Gastrocnemius medialis (tissue), 4 donors: ENCODE measurements at regions of chr18 and their contacts with region 1.

Region 1: GRCh38 chr18:77207540-77207939 is 42.1 kb upstream of the GALR1 start:
- DNase-seq: peak; percentile 17 to 55
- ATAC-seq: peak; percentile 48 to 74
- H3K4me3 ChIP-seq: peak overlapping the region in 1 of 4 donors; percentile 35
- H3K27ac ChIP-seq: peak overlapping the region; percentile 51 to 77 (median 76)
- H3K4me1 ChIP-seq: peaks cover 0 to 32% of the 10 kb centered on the region in 2 donors
- H3K27me3 ChIP-seq: no peaks in the 10 kb centered on the region
- CTCF ChIP-seq: peak; percentile 38 to 62 (median 49)
- POLR2A ChIP-seq: no peak

Region 2: DNA sequence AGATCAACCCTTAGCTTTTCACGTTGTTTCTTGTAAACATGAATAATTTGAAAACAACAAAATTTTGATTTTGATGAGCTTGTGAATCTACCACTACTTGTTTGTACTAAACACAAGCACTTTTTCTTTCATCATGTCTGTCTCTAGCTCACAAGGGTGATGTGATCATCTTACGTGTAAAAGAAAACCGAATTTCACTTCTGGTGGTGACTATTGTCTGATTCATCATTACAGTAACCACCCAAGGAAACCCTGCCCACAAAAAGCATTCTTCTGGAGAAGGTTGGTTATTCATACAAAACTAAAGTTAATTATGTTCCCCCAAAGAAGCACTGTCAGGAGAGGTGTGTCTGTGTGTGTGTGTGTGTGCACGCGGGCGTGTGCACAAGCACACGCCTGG is 997.9 kb before region 1 on chr18:
- in situ Hi-C with region 1: no loop called
- intact Hi-C with region 1: no loop called
- DNase-seq: no peak
- ATAC-seq: no peak
- H3K4me3 ChIP-seq: no peak overlapping the region
- H3K27ac ChIP-seq: no peak overlapping the region
- H3K4me1 ChIP-seq: no peaks in the 10 kb centered on the region
- H3K27me3 ChIP-seq: no peaks in the 10 kb centered on the region
- CTCF ChIP-seq: no peak
- POLR2A ChIP-seq: no peak

Region 3: DNA sequence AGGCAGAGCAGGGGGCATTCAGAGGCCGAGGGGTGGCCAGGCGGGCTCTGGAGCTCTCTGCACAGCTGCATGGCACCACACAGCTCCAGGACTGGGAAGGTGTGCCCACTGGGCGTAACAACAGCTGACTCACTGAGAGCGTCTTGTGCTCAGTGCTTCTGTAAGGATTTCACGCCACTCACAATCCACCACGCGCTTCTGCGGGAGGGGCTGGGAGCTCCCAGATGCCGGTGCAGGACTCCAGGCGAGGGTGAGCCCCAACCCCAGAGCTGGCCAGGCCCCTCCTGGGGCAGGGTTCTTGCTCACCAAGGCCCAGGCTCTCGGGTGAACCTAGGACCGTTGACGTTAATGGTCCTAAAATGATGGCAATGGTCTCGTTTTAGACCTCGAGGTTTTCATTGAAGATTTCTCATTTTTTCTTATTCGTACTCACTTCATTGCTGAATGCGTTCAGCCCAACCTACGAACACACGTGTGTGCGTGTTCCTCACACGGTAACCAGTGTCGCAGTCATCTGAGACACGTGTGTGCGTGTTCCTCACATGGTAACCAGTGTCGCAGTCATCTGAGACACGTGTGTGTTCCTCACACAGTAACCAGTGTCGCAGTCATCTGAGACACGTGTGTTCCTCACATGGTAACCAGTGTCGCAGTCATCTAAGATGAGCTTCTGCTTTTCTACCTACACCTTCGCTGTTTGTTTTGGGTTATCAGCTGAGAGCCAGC is 423.6 kb before region 1 on chr18:
- in situ Hi-C with region 1: no loop called
- intact Hi-C with region 1: no loop called
- DNase-seq: no peak
- ATAC-seq: no peak
- H3K4me3 ChIP-seq: no peak overlapping the region
- H3K27ac ChIP-seq: no peak overlapping the region
- H3K4me1 ChIP-seq: no peaks in the 10 kb centered on the region
- H3K27me3 ChIP-seq: peaks cover 0 to 14% (median 6%) of the 10 kb centered on the region in 3 donors
- CTCF ChIP-seq: no peak
- POLR2A ChIP-seq: no peak

Region 4: GRCh38 chr18:76875390-76876325 is 331.9 kb before region 1 on chr18:
- in situ Hi-C with region 1: no loop called
- intact Hi-C with region 1: loop called (anchors 10 kb)
- DNase-seq: no peak
- ATAC-seq: no peak
- H3K4me3 ChIP-seq: no peak overlapping the region
- H3K27ac ChIP-seq: no peak overlapping the region
- H3K4me1 ChIP-seq: no peaks in the 10 kb centered on the region
- H3K27me3 ChIP-seq: no peaks in the 10 kb centered on the region
- CTCF ChIP-seq: peak in 3 of 5 experiments; percentile 33 to 58 (median 46)
- POLR2A ChIP-seq: no peak

Region 5: DNA sequence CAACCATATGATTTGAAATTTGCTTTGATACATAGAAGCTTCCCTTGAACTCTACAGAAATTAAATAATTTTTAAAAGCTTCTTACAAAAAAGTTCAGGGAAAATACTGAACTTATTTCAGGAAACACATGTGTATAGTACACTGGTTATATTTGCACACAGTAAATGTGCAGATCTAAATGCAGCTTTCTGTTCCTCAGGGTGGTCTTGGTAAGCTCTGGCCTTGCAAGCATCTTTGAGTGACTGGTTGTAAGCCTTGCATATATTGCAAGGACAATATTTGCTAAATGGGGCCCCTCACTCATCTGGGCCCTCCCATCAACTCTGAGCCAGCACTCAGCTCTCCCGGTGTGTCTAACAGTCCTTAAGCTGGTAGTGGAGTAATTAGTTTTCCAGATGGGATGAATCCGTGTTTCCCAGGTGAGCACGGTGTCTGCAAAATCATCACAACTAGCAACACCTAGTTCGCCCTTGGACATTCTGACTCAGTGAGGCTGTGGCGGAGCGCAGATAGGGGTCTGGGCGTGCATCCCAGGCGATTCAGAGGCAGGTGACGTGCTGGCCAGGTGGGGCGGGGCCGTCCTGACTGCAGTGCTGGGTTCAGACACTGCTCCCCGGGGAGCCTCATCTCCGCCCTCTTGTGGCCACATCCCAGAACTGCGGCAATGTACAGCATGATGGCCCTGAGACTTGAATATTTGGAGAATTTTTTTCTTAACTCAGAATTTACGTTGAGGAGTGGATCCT is 224.5 kb before region 1 on chr18:
- in situ Hi-C with region 1: loop called in 1 of 4 experiments (anchors 25 kb)
- intact Hi-C with region 1: no loop called
- DNase-seq: peak; percentile 37 to 73
- ATAC-seq: peak; percentile 66 to 73
- H3K4me3 ChIP-seq: no peak overlapping the region
- H3K27ac ChIP-seq: no peak overlapping the region
- H3K4me1 ChIP-seq: peaks cover under 1 to 2% of the 10 kb centered on the region in 2 donors
- H3K27me3 ChIP-seq: no peaks in the 10 kb centered on the region
- CTCF ChIP-seq: peak; percentile 73 to 90 (median 86)
- POLR2A ChIP-seq: no peak

Region 6: GRCh38 chr18:76991021-76991688 is 216.4 kb before region 1 on chr18:
- in situ Hi-C with region 1: loop called in 2 of 4 experiments (anchors 10 to 25 kb)
- intact Hi-C with region 1: no loop called
- DNase-seq: no peak
- ATAC-seq: no peak
- H3K4me3 ChIP-seq: no peak overlapping the region
- H3K27ac ChIP-seq: no peak overlapping the region
- H3K4me1 ChIP-seq: no peaks in the 10 kb centered on the region
- H3K27me3 ChIP-seq: no peaks in the 10 kb centered on the region
- CTCF ChIP-seq: no peak
- POLR2A ChIP-seq: no peak

Region 7: DNA sequence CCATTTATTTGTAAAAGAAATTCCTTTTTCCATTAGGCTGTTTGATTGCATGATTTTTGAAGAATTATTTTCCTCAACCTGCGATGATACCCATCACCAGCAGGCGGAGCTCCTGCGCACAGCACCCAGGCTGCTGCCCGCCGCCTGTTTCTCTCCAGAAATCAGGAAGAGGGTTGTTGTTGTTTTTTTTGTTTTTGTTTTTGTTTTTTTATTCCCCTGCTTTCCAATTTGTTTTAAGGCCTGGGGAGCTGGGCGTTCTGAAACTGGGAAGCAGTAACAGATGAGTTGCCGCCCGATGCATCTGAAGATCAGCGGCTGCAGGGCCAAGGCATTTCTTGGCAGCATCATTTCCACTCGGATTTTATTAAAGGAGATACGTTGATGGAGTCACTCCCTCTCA is 207.0 kb before region 1 on chr18:
- in situ Hi-C with region 1: loop called (anchors 5 to 25 kb)
- intact Hi-C with region 1: loop called (anchors 1 kb)
- DNase-seq: peak in 1 of 2 donors; percentile 56
- ATAC-seq: peak; percentile 35 to 37
- H3K4me3 ChIP-seq: peak overlapping the region in 2 of 4 donors; percentile 4 to 19
- H3K27ac ChIP-seq: peak overlapping the region in 1 of 4 donors; percentile 50
- H3K4me1 ChIP-seq: peaks cover 0 to 5% of the 10 kb centered on the region in 2 donors
- H3K27me3 ChIP-seq: no peaks in the 10 kb centered on the region
- CTCF ChIP-seq: peak; percentile 92 to 99 (median 95)
- POLR2A ChIP-seq: no peak

Region 8: GRCh38 chr18:77054606-77055428 is 152.7 kb before region 1 on chr18:
- in situ Hi-C with region 1: loop called in 1 of 4 experiments (anchors 25 kb)
- intact Hi-C with region 1: loop called (anchors 5 kb)
- DNase-seq: peak; percentile 73 to 85
- ATAC-seq: peak; percentile 66 to 69
- H3K4me3 ChIP-seq: peak overlapping the region in 1 of 4 donors; percentile 33
- H3K27ac ChIP-seq: peak overlapping the region; percentile 81 to 90 (median 84)
- H3K4me1 ChIP-seq: peaks cover 63 to 64% of the 10 kb centered on the region in 2 donors
- H3K27me3 ChIP-seq: no peaks in the 10 kb centered on the region
- CTCF ChIP-seq: peak; percentile 70 to 83 (median 78)
- POLR2A ChIP-seq: peak in 1 of 2 donors; percentile 13

Region 9: DNA sequence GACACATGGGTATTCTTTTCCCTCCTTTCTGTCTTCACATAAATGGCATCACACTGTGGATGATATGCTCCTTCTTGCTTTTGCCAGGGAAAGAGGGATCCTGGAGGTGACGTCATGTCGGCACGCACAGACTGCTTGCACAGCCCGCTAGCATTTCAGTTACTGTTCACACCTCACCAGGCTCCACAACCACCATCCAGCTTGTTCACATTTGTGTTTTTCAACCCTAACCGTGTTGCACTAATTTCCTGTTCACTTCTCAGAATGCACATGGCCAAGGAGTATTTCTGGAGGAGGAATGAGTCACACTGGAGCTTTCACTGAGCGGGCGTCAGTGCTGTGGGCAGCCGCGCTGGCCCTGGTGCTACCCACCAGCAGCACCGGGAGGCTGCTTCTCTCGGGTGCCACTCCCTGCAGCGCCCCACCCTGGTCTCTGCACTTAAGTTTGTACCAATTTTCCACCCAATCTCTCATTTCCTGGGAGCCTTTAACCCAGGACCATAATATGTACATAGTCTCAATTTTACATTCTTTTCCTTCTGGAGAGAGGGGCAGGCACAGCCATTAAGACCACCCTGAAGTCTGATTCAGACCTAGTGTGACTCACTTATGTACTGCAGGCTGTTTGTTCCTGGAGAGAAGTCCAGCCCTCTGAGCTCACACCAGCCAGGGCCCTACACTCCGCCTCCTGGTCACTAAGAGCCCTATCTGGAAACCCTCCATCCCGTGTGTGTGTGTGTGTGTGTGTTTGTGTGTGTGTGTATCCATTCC is 140.1 kb before region 1 on chr18:
- in situ Hi-C with region 1: loop called in 2 of 4 experiments (anchors 5 to 25 kb)
- intact Hi-C with region 1: no loop called
- DNase-seq: peak; percentile 68 to 74
- ATAC-seq: peak; percentile 83
- H3K4me3 ChIP-seq: no peak overlapping the region
- H3K27ac ChIP-seq: peak overlapping the region; percentile 62 to 81 (median 76)
- H3K4me1 ChIP-seq: peaks cover 40 to 45% of the 10 kb centered on the region in 2 donors
- H3K27me3 ChIP-seq: no peaks in the 10 kb centered on the region
- CTCF ChIP-seq: peak in 2 of 5 experiments; percentile 17 to 31
- POLR2A ChIP-seq: peak; percentile 55 to 69